ENCODE measurements at regions of chr9 and their contacts with region 1.

Region 1: GRCh38 chr9:96654443-96655197 is 497 bp downstream of the PRXL2C start:
- DNase-seq: peak; percentile 43 to 94 (median 72)
- ATAC-seq: peak; percentile 87
- H3K4me3 ChIP-seq: peak overlapping the region; percentile 58
- H3K4me3 Mint-ChIP-seq: peak overlapping the region; percentile 90
- H3K27ac ChIP-seq: peak overlapping the region; percentile 52 to 73
- H3K27ac Mint-ChIP-seq: peak overlapping the region; percentile 93
- H3K4me1 ChIP-seq: peaks cover 20% of the 10 kb centered on the region
- H3K4me1 Mint-ChIP-seq: peaks cover 32% of the 10 kb centered on the region
- H3K27me3 ChIP-seq: no peaks in the 10 kb centered on the region
- H3K27me3 Mint-ChIP-seq: no peaks in the 10 kb centered on the region
- CTCF ChIP-seq: no peak

Region 2: GRCh38 chr9:96566498-96567207 is 88.0 kb before region 1 on chr9:
- CTCF ChIA-PET with region 1: interaction called, 4 read pairs
- POLR2A ChIA-PET with region 1: interaction called, 12 read pairs
- intact Hi-C with region 1: loop called (anchors 5 kb)
- DNase-seq: peak; percentile 65 to 92 (median 78)
- ATAC-seq: peak; percentile 83
- H3K4me3 ChIP-seq: peak overlapping the region; percentile 85
- H3K4me3 Mint-ChIP-seq: peak overlapping the region; percentile 85
- H3K27ac ChIP-seq: peak overlapping the region; percentile 64 to 73
- H3K27ac Mint-ChIP-seq: peak overlapping the region; percentile 62
- H3K4me1 ChIP-seq: peaks cover 15% of the 10 kb centered on the region
- H3K4me1 Mint-ChIP-seq: peaks cover 31% of the 10 kb centered on the region
- H3K27me3 ChIP-seq: no peaks in the 10 kb centered on the region
- H3K27me3 Mint-ChIP-seq: no peaks in the 10 kb centered on the region
- CTCF ChIP-seq: peak; percentile 82

Region 3: DNA sequence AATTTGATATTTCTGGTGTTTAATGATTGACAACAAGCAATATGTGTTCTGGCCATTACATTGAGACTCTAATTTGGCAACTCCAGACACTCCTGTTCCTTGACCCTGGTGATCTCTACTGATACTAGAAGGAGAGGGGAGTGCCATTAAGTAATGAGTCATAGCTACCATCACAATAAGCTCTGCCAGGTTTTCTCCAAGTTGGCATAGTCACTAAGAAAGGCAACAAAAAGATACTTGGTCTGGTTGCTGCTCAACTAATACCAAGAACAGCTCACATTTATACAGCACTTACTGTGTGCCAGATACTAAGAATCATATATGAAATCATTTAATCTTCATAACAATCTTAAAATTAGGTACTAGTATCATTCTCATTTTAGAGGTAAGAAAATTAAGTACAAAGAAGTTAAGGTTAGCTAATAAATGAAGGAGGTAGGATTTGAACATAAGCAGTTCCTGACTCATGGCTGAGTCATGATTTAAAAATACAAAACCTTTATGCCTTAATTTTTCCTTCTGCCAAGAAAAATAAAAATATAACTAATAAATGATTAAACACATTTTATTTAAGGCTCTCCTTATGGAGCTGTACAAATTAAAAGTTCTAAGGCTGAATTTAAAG is 20.4 kb after region 1 on chr9:
- CTCF ChIA-PET with region 1: no interaction called
- POLR2A ChIA-PET with region 1: no interaction called
- intact Hi-C with region 1: no loop called
- DNase-seq: no peak
- ATAC-seq: no peak
- H3K4me3 ChIP-seq: no peak overlapping the region
- H3K4me3 Mint-ChIP-seq: no peak overlapping the region
- H3K27ac ChIP-seq: no peak overlapping the region
- H3K27ac Mint-ChIP-seq: no peak overlapping the region
- H3K4me1 ChIP-seq: no peaks in the 10 kb centered on the region
- H3K4me1 Mint-ChIP-seq: no peaks in the 10 kb centered on the region
- H3K27me3 ChIP-seq: no peaks in the 10 kb centered on the region
- H3K27me3 Mint-ChIP-seq: peaks cover 26% of the 10 kb centered on the region
- CTCF ChIP-seq: no peak

Region 4: GRCh38 chr9:96777426-96777864 is 122.8 kb after region 1 on chr9:
- CTCF ChIA-PET with region 1: no interaction called
- POLR2A ChIA-PET with region 1: no interaction called
- intact Hi-C with region 1: loop called in 1 of 2 experiments (anchors 5 kb)
- DNase-seq: peak in 1 of 14 experiments; percentile 24
- ATAC-seq: peak; percentile 40
- H3K4me3 ChIP-seq: peak overlapping the region; percentile 78
- H3K4me3 Mint-ChIP-seq: peak overlapping the region; percentile 99
- H3K27ac ChIP-seq: peak overlapping the region; percentile 78 to 80
- H3K27ac Mint-ChIP-seq: peak overlapping the region; percentile 99
- H3K4me1 ChIP-seq: peaks cover 13% of the 10 kb centered on the region
- H3K4me1 Mint-ChIP-seq: peaks cover 57% of the 10 kb centered on the region
- H3K27me3 ChIP-seq: no peaks in the 10 kb centered on the region
- H3K27me3 Mint-ChIP-seq: no peaks in the 10 kb centered on the region
- CTCF ChIP-seq: no peak